ENCODE measurements at regions of chrX and their contacts with region 1.

Region 1: GRCh38 chrX:81201671-81202455 is at the starts of genes HMGN5 and SH3BGRL:
- DNase-seq: peak; percentile 83
- ATAC-seq: peak; percentile 92
- H3K4me3 ChIP-seq: peak within 1 kb of the TSS; percentile 74 to 94 (median 85)
- H3K4me3 Mint-ChIP-seq: peak within 1 kb of the TSS; percentile 99
- H3K27ac ChIP-seq: peak within 1 kb of the TSS; percentile 85
- H3K27ac Mint-ChIP-seq: peak within 1 kb of the TSS; percentile 97
- H3K4me1 ChIP-seq: peaks cover 18 to 30% of the 10 kb centered on the region in 2 donors
- H3K4me1 Mint-ChIP-seq: peaks cover 52% of the 10 kb centered on the region
- H3K27me3 ChIP-seq: no peaks in the 10 kb centered on the region
- H3K27me3 Mint-ChIP-seq: no peaks in the 10 kb centered on the region
- CTCF ChIP-seq: no peak
- total RNA-seq, gene HMGN5: 0.37 and 0.46 TPM in 2 replicates
- total RNA-seq, gene SH3BGRL: 105 and 109 TPM in 2 replicates

Region 2: DNA sequence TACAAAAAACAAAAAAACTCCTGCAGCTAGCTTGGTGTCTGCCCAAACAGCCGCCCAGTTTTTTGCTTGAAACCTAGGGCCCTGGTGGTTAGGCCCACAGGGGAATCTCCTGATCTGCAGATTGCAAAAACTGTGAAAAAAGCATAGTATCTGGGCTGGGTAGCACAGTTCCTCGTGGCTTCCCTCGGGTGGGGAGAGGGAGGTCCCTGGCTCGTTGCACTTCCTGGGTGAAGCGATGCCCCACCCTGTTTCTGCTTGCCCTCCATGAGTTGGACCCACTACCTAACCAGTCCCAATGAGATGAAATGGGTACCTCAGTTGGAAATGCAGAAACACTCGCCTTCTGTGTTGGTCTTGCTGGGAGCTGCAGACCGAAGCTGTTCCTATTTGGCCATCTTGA is 373.6 kb before region 1 on chrX:
- CTCF ChIA-PET with region 1: no interaction called
- POLR2A ChIA-PET with region 1: no interaction called
- intact Hi-C with region 1: no loop called
- DNase-seq: no peak
- ATAC-seq: no peak
- H3K4me3 ChIP-seq: no peak overlapping the region
- H3K4me3 Mint-ChIP-seq: no peak overlapping the region
- H3K27ac ChIP-seq: no peak overlapping the region
- H3K27ac Mint-ChIP-seq: no peak overlapping the region
- H3K4me1 ChIP-seq: no peaks in the 10 kb centered on the region
- H3K4me1 Mint-ChIP-seq: no peaks in the 10 kb centered on the region
- H3K27me3 ChIP-seq: no peaks in the 10 kb centered on the region
- H3K27me3 Mint-ChIP-seq: no peaks in the 10 kb centered on the region
- CTCF ChIP-seq: no peak

Region 3: GRCh38 chrX:81121513-81122382 is 80.1 kb before region 1 on chrX:
- CTCF ChIA-PET with region 1: interaction called, 3 read pairs
- POLR2A ChIA-PET with region 1: interaction called, 3 read pairs
- intact Hi-C with region 1: loop called (anchors 1 kb)
- DNase-seq: peak; percentile 88
- ATAC-seq: peak; percentile 94
- H3K4me3 ChIP-seq: peak overlapping the region; percentile 55 to 68 (median 67)
- H3K4me3 Mint-ChIP-seq: peak overlapping the region; percentile 93
- H3K27ac ChIP-seq: peak overlapping the region in 1 of 2 donors; percentile 37
- H3K27ac Mint-ChIP-seq: peak overlapping the region; percentile 46
- H3K4me1 ChIP-seq: peaks cover 0 to 7% of the 10 kb centered on the region in 2 donors
- H3K4me1 Mint-ChIP-seq: peaks cover 17% of the 10 kb centered on the region
- H3K27me3 ChIP-seq: no peaks in the 10 kb centered on the region
- H3K27me3 Mint-ChIP-seq: no peaks in the 10 kb centered on the region
- CTCF ChIP-seq: no peak

Region 4: GRCh38 chrX:81261576-81261975 is 59.7 kb after region 1 on chrX:
- CTCF ChIA-PET with region 1: no interaction called
- POLR2A ChIA-PET with region 1: no interaction called
- intact Hi-C with region 1: no loop called
- DNase-seq: no peak
- ATAC-seq: no peak
- H3K4me3 ChIP-seq: no peak overlapping the region
- H3K4me3 Mint-ChIP-seq: no peak overlapping the region
- H3K27ac ChIP-seq: no peak overlapping the region
- H3K27ac Mint-ChIP-seq: no peak overlapping the region
- H3K4me1 ChIP-seq: no peaks in the 10 kb centered on the region
- H3K4me1 Mint-ChIP-seq: peaks cover 57% of the 10 kb centered on the region
- H3K27me3 ChIP-seq: no peaks in the 10 kb centered on the region
- H3K27me3 Mint-ChIP-seq: no peaks in the 10 kb centered on the region
- CTCF ChIP-seq: no peak

Region 5: GRCh38 chrX:81959964-81960363 is 758.1 kb after region 1 on chrX:
- CTCF ChIA-PET with region 1: no interaction called
- POLR2A ChIA-PET with region 1: no interaction called
- intact Hi-C with region 1: no loop called
- DNase-seq: no peak
- ATAC-seq: no peak
- H3K4me3 ChIP-seq: no peak overlapping the region
- H3K4me3 Mint-ChIP-seq: no peak overlapping the region
- H3K27ac ChIP-seq: no peak overlapping the region
- H3K27ac Mint-ChIP-seq: no peak overlapping the region
- H3K4me1 ChIP-seq: no peaks in the 10 kb centered on the region
- H3K4me1 Mint-ChIP-seq: no peaks in the 10 kb centered on the region
- H3K27me3 ChIP-seq: no peaks in the 10 kb centered on the region
- H3K27me3 Mint-ChIP-seq: no peaks in the 10 kb centered on the region
- CTCF ChIP-seq: no peak

Measured in B cell (primary cell).